GM12878 (cell line): ENCODE measurements at regions of chr3 and their contacts with region 1.

Region 1: GRCh38 chr3:182713743-182714517 is 79.4 kb upstream of the ATP11B start:
- DNase-seq: peak; percentile 49
- ATAC-seq: peak; percentile 48
- H3K4me3 ChIP-seq: no peak overlapping the region
- H3K27ac ChIP-seq: no peak overlapping the region; the same call in 1 of the 2 replicates
- H3K4me1 ChIP-seq: peaks cover 35% of the 10 kb centered on the region
- H3K27me3 ChIP-seq: no peaks in the 10 kb centered on the region
- CTCF ChIP-seq: peak; percentile 51 to 81 (median 64); a peak in 5 of 6 replicates
- EP300 ChIP-seq: no peak
- POLR2A ChIP-seq: no peak
- RAD21 ChIP-seq: peak; percentile 89

Region 2: DNA sequence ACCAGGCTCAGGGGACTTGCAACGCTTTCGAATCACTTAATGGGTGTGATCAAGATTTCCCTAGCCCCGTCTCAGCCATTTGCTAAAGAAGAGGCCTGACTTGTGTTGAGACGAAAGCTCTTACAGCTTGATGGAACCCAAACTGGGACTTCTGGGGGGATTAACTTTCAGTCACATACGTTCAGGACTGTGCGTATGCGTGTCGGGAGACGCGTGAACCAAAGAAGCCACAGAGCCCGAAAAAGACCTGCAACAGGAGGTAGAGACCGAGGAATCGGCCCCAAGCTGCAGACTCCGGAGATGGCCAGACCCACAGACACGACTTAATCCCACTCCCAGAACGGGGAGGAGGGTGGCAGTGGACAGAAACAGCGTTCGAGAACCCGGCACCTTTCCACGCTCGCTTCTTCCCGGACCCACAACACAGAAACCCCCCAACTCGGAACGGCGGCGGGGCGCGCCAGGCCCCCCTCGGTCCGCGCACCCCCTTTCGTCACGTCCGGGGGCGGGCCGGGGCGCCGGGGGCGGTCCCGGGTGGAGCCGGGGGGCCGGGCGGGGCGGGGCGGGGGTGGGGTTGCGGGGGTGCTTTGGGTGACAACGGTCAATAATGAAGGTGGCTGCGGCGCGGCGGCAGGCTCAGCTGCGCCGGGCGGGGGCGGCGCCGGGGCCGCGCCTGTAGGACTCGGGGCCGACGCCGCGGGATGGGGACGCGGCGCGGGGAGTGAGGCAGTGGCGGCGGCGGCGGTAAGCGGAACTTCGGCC is 79.2 kb after region 1 on chr3 and contains the start of gene ATP11B:
- CTCF ChIA-PET with region 1: interaction called, 39 read pairs
- POLR2A ChIA-PET with region 1: interaction called, 52 read pairs
- RAD21 ChIA-PET with region 1: interaction called, 89 read pairs
- SMC1A ChIA-PET with region 1: interaction called, 122 read pairs
- in situ Hi-C with region 1: no loop called
- intact Hi-C with region 1: loop called (anchors 1 kb)
- DNase-seq: no peak
- ATAC-seq: peak; percentile 69
- H3K4me3 ChIP-seq: peak within 1 kb of the TSS; percentile 90
- H3K27ac ChIP-seq: peak within 1 kb of the TSS; percentile 96
- H3K4me1 ChIP-seq: peaks cover 15% of the 10 kb centered on the region
- H3K27me3 ChIP-seq: no peaks in the 10 kb centered on the region
- CTCF ChIP-seq: no peak
- EP300 ChIP-seq: no peak
- POLR2A ChIP-seq: peak; percentile 91
- RAD21 ChIP-seq: no peak
- polyA plus RNA-seq, gene ATP11B: 10.3 to 11.3 TPM

Region 3: GRCh38 chr3:182837855-182838454 is 124.0 kb after region 1 on chr3:
- CTCF ChIA-PET with region 1: interaction called, 195 read pairs
- POLR2A ChIA-PET with region 1: interaction called, 5 read pairs
- RAD21 ChIA-PET with region 1: interaction called, 136 read pairs
- SMC1A ChIA-PET with region 1: interaction called, 106 read pairs
- in situ Hi-C with region 1: loop called (anchors 5 kb)
- intact Hi-C with region 1: loop called (anchors 1 kb)
- DNase-seq: no peak
- ATAC-seq: no peak
- H3K4me3 ChIP-seq: no peak overlapping the region
- H3K27ac ChIP-seq: no peak overlapping the region
- H3K4me1 ChIP-seq: no peaks in the 10 kb centered on the region; the same call in 1 of the 2 replicates
- H3K27me3 ChIP-seq: no peaks in the 10 kb centered on the region
- CTCF ChIP-seq: peak in 1 of 3 experiments; percentile 29; a peak in 1 of 6 replicates
- EP300 ChIP-seq: no peak
- POLR2A ChIP-seq: no peak
- RAD21 ChIP-seq: peak; percentile 45; the same call in 1 of the 2 replicates

Region 4: DNA sequence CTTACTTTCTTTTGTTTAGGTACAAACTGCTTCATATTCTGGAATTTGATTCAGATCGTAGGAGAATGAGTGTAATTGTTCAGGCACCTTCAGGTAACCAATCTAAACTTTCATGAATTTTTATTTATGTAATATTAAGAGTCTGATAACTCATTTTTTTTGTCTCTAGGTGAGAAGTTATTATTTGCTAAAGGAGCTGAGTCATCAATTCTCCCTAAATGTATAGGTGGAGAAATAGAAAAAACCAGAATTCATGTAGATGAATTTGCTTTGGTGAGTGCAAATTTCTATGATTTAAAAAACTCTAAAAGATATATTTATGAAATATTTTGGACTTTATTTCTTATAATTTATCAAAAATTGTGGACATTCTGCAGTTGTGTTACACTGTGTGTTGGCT is 155.1 kb after region 1 on chr3:
- CTCF ChIA-PET with region 1: interaction called, 20 read pairs
- POLR2A ChIA-PET with region 1: no interaction called
- RAD21 ChIA-PET with region 1: interaction called, 11 read pairs
- SMC1A ChIA-PET with region 1: interaction called, 17 read pairs
- in situ Hi-C with region 1: no loop called
- intact Hi-C with region 1: no loop called
- DNase-seq: no peak
- ATAC-seq: no peak
- H3K4me3 ChIP-seq: no peak overlapping the region
- H3K27ac ChIP-seq: no peak overlapping the region
- H3K4me1 ChIP-seq: no peaks in the 10 kb centered on the region
- H3K27me3 ChIP-seq: no peaks in the 10 kb centered on the region
- CTCF ChIP-seq: no peak
- EP300 ChIP-seq: no peak
- POLR2A ChIP-seq: no peak
- RAD21 ChIP-seq: no peak

Region 5: GRCh38 chr3:182909318-182910040 is 195.5 kb after region 1 on chr3:
- CTCF ChIA-PET with region 1: interaction called, 41 read pairs
- POLR2A ChIA-PET with region 1: interaction called, 3 read pairs
- RAD21 ChIA-PET with region 1: interaction called, 26 read pairs
- SMC1A ChIA-PET with region 1: interaction called, 20 read pairs
- in situ Hi-C with region 1: no loop called
- intact Hi-C with region 1: no loop called
- DNase-seq: no peak
- ATAC-seq: peak; percentile 31; the same call in 2 of the 3 replicates
- H3K4me3 ChIP-seq: no peak overlapping the region
- H3K27ac ChIP-seq: no peak overlapping the region
- H3K4me1 ChIP-seq: peaks cover 11% of the 10 kb centered on the region
- H3K27me3 ChIP-seq: no peaks in the 10 kb centered on the region
- CTCF ChIP-seq: peak; percentile 34 to 49 (median 48); a peak in 5 of 6 replicates
- EP300 ChIP-seq: no peak
- POLR2A ChIP-seq: no peak
- RAD21 ChIP-seq: peak; percentile 45; the same call in 1 of the 2 replicates

Region 6: DNA sequence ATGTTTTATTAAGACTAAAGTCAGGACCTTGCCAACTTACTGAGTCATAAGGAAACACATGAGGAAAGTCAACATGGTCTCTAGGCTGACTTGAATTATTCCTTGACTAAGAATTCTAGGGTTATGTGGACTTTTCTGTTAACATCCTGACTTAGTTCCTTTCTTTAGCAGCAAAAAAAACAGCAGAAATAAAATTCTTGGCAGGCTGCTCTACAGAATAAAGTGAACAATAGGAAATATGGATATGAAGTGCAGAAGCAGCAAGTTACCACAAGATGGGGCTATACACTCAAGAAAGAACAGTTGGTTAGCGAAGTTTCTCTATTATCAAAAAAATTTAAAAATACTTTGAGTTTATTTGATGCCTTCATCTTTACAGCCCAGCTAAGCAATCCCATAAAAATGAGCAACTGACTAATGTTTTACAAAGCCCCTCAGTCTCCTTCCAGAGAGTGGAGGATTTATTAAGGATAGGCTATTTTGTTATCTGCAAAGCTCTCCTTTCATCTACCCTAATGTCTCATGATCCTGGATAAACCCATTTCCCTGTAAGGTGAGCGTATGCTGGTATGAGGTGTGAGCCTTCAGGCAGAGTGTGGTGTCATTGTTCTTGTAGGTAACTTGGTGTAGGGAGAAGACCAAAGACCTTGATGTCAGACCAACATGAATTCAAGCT is 408.5 kb after region 1 on chr3:
- CTCF ChIA-PET with region 1: interaction called, 31 read pairs
- POLR2A ChIA-PET with region 1: no interaction called
- RAD21 ChIA-PET with region 1: interaction called, 14 read pairs
- SMC1A ChIA-PET with region 1: interaction called, 23 read pairs
- in situ Hi-C with region 1: no loop called
- intact Hi-C with region 1: loop called (anchors 5 kb)
- DNase-seq: no peak
- ATAC-seq: peak; percentile 68
- H3K4me3 ChIP-seq: no peak overlapping the region
- H3K27ac ChIP-seq: no peak overlapping the region
- H3K4me1 ChIP-seq: no peaks in the 10 kb centered on the region
- H3K27me3 ChIP-seq: no peaks in the 10 kb centered on the region
- CTCF ChIP-seq: peak; percentile 61 to 75 (median 73)
- EP300 ChIP-seq: no peak
- POLR2A ChIP-seq: no peak
- RAD21 ChIP-seq: peak; percentile 93

Region 7: DNA sequence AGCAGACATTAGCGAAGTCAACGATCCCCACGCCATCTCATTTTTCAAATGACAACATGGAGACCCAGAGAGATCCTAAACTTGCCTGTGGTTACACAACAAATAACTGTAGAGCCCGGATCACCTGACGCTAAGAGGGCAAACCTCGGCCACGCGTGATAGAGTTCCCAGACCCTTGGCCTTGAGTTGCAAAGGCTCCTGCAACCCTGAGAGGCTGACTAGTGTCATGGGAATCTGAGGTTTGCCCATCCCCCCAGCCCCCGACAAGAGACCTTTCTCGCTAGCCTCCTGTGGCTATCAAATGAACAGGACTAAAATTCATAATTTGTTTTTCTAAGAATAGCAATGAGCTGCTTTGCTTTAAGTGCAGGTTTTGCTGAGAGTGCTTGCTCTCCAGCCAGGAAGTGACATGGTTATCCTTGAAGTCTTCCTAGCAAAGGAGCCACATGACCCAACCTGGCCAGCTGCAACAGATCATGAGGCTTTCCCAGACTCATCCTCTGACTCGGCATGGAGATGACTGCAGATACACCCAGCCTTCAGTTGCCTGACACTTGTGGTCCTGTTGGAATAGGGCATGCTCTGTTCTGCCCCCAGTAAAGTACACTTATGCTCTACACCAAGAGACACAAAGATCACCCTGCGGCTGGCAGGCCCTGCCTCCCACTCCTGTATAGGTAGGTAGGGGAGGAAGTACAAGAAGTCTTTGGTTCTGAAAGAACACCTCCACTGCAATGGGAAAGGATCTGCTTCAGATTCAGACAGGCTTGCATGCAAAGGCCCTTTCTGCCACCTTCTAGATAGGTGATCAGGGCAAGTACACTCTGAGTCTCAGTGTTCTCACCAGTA is 678.5 kb after region 1 on chr3:
- CTCF ChIA-PET with region 1: interaction called, 4 read pairs
- POLR2A ChIA-PET with region 1: no interaction called
- RAD21 ChIA-PET with region 1: interaction called, 5 read pairs
- SMC1A ChIA-PET with region 1: no interaction called
- in situ Hi-C with region 1: loop called (anchors 5 kb)
- intact Hi-C with region 1: no loop called
- DNase-seq: no peak
- ATAC-seq: no peak
- H3K4me3 ChIP-seq: no peak overlapping the region
- H3K27ac ChIP-seq: no peak overlapping the region
- H3K4me1 ChIP-seq: no peaks in the 10 kb centered on the region
- H3K27me3 ChIP-seq: no peaks in the 10 kb centered on the region
- CTCF ChIP-seq: no peak
- EP300 ChIP-seq: no peak
- POLR2A ChIP-seq: no peak
- RAD21 ChIP-seq: no peak